ENCODE measurements at regions of chr11 and their contacts with region 1.

Region 1: GRCh38 chr11:47213985-47214564 is 699 bp upstream of the DDB2 start:
- DNase-seq: peak; percentile 94
- ATAC-seq: peak; percentile 80
- H3K4me3 Mint-ChIP-seq: peak overlapping the region; percentile 99
- H3K27ac Mint-ChIP-seq: peak overlapping the region; percentile 100
- H3K4me1 Mint-ChIP-seq: peaks cover 31% of the 10 kb centered on the region
- H3K27me3 Mint-ChIP-seq: no peaks in the 10 kb centered on the region

Region 2: GRCh38 chr11:46845740-46846509 is 368.1 kb before region 1 on chr11 and contains the start of gene CKAP5:
- CTCF ChIA-PET with region 1: no interaction called
- POLR2A ChIA-PET with region 1: no interaction called
- intact Hi-C with region 1: loop called in 1 of 2 experiments (anchors 1 kb)
- DNase-seq: peak; percentile 92
- ATAC-seq: peak; percentile 92
- H3K4me3 Mint-ChIP-seq: peak within 1 kb of the TSS; percentile 86
- H3K27ac Mint-ChIP-seq: peak within 1 kb of the TSS; percentile 94
- H3K4me1 Mint-ChIP-seq: peaks cover 30% of the 10 kb centered on the region
- H3K27me3 Mint-ChIP-seq: no peaks in the 10 kb centered on the region
- total RNA-seq, gene CKAP5: 166 to 183 TPM

Region 3: GRCh38 chr11:47186076-47186936 is 27.8 kb before region 1 on chr11 and contains the start of gene PACSIN3:
- CTCF ChIA-PET with region 1: interaction called, 7 read pairs
- POLR2A ChIA-PET with region 1: interaction called, 7 read pairs
- intact Hi-C with region 1: loop called in 1 of 2 experiments (anchors 1 kb)
- DNase-seq: peak; percentile 61
- ATAC-seq: peak; percentile 64
- H3K4me3 Mint-ChIP-seq: peak within 1 kb of the TSS; percentile 63
- H3K27ac Mint-ChIP-seq: no peak within 1 kb of the TSS
- H3K4me1 Mint-ChIP-seq: peaks cover 7% of the 10 kb centered on the region
- H3K27me3 Mint-ChIP-seq: peaks cover 19% of the 10 kb centered on the region
- total RNA-seq, gene PACSIN3: 4.1 to 5.9 TPM

Region 4: DNA sequence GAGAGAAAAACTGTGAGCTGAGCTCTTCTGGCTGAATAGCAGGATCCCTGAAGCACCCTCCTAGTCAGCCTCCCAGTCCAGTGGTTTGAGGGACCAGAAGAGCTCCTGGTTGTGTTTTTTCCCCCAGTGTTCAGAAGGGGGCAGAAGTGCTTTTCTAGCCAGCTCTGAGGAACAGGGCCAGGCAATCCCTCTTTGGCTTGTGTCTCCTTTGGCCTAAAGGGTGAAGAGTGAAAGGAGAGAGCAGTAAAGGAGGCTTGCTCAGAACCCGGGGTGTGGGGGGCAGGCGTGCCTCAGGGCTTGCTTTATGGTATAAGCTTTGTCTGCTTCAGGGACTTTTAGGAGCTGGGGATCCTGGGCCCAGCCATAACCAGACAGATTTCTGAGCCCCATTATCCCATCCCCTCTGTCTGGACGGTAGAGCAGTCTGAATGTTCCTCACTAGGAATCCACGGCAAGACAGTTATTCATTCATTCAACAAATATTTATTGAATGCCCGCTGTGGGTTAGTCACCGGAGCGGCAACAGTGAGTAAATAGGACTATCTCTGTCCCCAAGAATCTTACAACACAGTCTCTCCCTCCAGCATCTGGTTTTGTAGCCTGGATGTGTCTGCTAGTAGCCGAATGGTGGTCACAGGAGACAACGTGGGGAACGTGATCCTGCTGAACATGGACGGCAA is 20.1 kb after region 1 on chr11:
- CTCF ChIA-PET with region 1: interaction called, 4 read pairs
- POLR2A ChIA-PET with region 1: interaction called, 10 read pairs
- intact Hi-C with region 1: no loop called
- DNase-seq: peak; percentile 25
- ATAC-seq: peak; percentile 31
- H3K4me3 Mint-ChIP-seq: no peak overlapping the region
- H3K27ac Mint-ChIP-seq: peak overlapping the region; percentile 81
- H3K4me1 Mint-ChIP-seq: peaks cover 28% of the 10 kb centered on the region
- H3K27me3 Mint-ChIP-seq: no peaks in the 10 kb centered on the region

Region 5: DNA sequence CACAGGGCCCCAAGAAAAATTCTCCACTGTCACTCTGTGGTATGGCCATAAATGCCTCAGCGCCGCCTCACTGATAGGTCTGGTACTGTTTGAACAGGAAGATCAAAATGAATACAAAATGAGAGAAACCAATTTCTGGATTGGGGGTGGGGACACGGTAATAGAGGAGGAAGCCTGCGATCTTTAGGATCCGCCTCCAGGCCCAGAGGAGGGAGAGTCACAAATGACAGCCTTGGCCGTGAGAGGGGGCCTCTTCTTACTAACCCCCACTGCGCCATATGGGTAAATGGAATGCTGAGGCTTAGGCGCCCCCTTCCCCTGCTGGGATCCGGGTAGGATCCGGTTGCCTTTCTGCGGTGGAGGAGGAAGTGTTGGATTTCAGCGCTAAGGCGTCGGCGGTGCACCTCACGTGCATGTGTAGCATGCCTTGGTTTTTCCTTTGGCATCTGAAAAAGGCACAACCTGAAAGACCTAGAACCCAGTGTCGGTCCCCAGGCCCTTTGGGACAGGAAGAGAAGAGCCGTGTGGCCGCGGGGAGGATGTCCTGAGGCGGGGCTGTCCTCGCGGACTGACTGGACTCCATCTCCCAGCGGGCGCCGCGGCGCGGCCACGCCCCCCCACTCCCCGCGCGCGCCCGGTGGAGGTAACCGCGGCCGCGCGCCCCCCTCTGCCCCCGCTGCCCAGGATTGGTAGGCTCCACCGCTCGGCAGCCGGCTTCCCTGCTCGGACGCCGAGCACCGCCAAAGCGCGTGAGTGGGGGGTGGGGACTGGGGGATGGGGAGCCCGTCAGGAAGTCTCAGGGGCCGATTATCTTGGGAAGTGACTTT is 55.1 kb after region 1 on chr11:
- CTCF ChIA-PET with region 1: interaction called, 3 read pairs
- POLR2A ChIA-PET with region 1: interaction called, 6 read pairs
- intact Hi-C with region 1: loop called (anchors 1 kb)
- DNase-seq: peak; percentile 93
- ATAC-seq: peak; percentile 61
- H3K4me3 Mint-ChIP-seq: peak overlapping the region; percentile 76
- H3K27ac Mint-ChIP-seq: peak overlapping the region; percentile 98
- H3K4me1 Mint-ChIP-seq: peaks cover 60% of the 10 kb centered on the region
- H3K27me3 Mint-ChIP-seq: no peaks in the 10 kb centered on the region

Region 6: DNA sequence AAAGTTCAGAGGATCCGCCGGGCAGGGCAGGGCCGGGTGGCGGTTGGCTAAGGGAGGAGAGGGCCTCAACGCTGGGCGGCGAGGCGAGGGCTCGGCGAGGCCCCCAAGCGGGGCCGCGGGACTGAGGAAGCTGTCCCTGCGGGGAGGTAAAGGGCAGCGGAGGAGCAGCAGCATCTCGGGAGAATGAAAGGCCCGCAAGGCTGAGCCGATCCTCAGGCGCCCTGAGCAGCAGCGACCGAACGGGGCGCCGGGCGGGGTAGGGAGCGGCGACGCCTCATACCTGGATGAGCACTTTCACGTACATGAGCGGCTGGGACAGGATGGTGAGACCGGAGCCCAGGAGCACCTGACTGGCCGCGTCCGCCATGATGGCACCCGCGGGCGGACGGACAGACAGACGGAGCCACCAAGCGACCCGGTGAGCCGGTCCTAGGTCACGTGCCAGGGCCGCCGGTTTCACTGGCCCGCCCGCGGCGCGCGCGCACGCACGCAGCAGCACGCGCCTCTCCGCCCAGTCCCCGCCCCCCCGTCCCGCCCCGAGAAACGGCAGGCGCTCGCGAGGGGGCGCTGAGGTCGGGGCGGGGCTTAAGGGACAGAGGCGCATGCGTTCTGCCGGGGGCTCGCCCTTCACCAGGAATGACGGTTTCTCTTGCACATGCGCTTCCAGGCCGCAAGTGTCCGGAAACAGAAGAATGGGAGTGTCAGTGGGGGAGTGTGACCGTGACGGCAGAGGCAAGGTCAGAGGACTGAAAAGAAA is 428.2 kb after region 1 on chr11 and contains the start of gene MTCH2:
- CTCF ChIA-PET with region 1: no interaction called
- POLR2A ChIA-PET with region 1: no interaction called
- intact Hi-C with region 1: loop called in 1 of 2 experiments (anchors 1 kb)
- DNase-seq: peak; percentile 98
- ATAC-seq: peak; percentile 94
- H3K4me3 Mint-ChIP-seq: peak within 1 kb of the TSS; percentile 99
- H3K27ac Mint-ChIP-seq: peak within 1 kb of the TSS; percentile 96
- H3K4me1 Mint-ChIP-seq: peaks cover 25% of the 10 kb centered on the region
- H3K27me3 Mint-ChIP-seq: no peaks in the 10 kb centered on the region
- total RNA-seq, gene MTCH2: 94.8 to 138 TPM

Region 7: DNA sequence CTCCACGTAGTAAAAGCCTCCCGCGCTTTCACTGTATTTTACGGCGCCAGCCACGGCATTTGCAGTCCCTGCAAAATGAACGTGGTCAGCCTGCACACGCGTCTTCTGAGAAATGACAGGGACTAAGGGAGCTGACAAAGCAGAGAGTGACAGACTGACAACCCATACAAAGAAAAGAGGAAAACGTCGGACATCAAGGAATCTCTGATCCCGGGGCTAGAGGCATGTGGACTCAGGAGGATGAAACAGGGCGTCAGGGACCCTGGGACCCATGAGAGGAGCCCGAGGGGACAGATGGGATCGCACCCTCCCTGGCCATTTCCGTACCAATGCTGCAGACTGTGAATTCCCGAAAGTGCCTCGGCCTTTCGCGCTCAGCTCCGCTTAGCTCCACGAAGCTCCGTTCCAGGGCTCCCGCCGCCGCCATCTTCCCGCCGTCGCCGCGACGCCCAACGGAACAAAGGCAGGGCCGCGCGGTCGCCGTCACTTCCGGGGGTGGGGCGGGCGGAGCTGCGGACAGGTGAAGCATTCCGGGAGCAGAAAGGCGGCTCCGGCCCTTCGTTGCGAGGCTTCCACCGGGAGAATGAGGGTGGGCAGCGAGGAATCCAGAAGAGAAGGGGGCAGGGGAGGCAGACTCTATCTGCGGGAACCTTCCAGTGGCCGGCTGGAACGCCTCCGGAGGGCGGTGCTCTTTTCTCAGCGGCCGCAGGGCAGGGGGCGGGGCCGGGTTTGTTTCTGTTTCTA is 634.0 kb after region 1 on chr11 and contains the start of gene NUP160:
- CTCF ChIA-PET with region 1: no interaction called
- POLR2A ChIA-PET with region 1: no interaction called
- intact Hi-C with region 1: loop called in 1 of 2 experiments (anchors 2 kb)
- DNase-seq: peak; percentile 94
- ATAC-seq: peak; percentile 88
- H3K4me3 Mint-ChIP-seq: peak within 1 kb of the TSS; percentile 90
- H3K27ac Mint-ChIP-seq: peak within 1 kb of the TSS; percentile 99
- H3K4me1 Mint-ChIP-seq: peaks cover 44% of the 10 kb centered on the region
- H3K27me3 Mint-ChIP-seq: no peaks in the 10 kb centered on the region
- total RNA-seq, gene NUP160: 67.1 to 84.5 TPM

Measured in activated CD4-positive, alpha-beta T cell treated with anti-CD3 and anti-CD28 coated beads for 36 hours (primary cell).